Activated T-helper 1 cell treated with anti-CD3 and anti-CD28 coated beads, Interleukin-12 subunit alpha, Interleukin-12 subunit beta, Interleukin-2, Interleukin-4 antibody, amounts not matched to agents 30 ng/mL and 10 ng/mL and 1 ng/mL, durations not matched to agents 14 hours and 24 hours and 36 hours (primary cell): ENCODE measurements at regions of chr2 and their contacts with region 1.

Region 1: DNA sequence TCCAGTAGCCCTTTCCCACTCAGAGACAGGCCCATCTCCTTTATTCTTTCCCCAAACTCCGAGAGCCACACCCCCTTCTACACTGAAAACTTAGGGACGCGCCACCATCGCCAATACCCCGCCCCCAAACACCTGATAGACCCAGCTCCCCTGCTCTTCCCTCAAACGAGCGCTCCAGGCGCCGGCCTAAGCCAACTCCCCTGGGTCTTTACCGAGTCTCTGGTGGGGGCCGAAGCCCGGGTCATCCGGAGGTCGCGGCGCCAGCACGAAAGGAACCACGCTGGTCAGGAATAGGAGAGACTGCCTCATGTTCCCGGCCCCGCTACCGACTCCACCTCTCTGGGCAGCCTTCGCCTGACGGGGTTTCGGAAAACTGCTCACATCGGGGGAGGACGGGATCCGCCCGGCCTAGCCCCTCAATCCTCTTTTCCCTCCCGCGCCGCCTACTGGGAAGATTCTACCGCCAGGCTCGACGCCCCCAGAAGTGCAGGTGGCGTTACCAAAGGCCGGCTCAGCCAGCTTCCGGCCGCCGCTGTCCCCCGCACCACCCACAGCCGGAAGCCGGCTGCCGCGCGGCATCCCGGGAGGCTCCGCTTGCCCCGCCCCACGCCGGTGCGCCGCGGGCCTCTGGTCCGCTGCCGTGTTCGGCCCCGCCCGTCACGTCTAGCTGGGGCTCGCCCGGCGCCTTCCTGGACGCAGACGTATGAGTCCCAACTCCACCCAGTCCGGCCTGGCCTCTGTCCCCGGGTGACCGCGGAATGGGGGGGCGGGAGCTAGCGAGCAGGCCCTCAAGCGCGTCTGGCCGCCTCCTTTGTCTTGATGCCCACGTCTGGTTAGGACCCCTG is at the start of gene ADAM17:
- DNase-seq: peak; percentile 89
- H3K4me3 Mint-ChIP-seq: peak within 1 kb of the TSS; percentile 99
- H3K27ac Mint-ChIP-seq: peak within 1 kb of the TSS; percentile 98
- H3K4me1 Mint-ChIP-seq: peaks cover 59% of the 10 kb centered on the region
- H3K27me3 Mint-ChIP-seq: no peaks in the 10 kb centered on the region
- total RNA-seq, gene ADAM17: 30.4 and 31.6 TPM in 2 replicates

Region 2: GRCh38 chr2:8821276-8822217 is 734.0 kb before region 1 on chr2:
- intact Hi-C with region 1: no loop called
- DNase-seq: no peak
- H3K4me3 Mint-ChIP-seq: no peak overlapping the region
- H3K27ac Mint-ChIP-seq: no peak overlapping the region
- H3K4me1 Mint-ChIP-seq: no peaks in the 10 kb centered on the region
- H3K27me3 Mint-ChIP-seq: no peaks in the 10 kb centered on the region

Region 3: GRCh38 chr2:9488583-9489547 is 66.7 kb before region 1 on chr2:
- intact Hi-C with region 1: loop called (anchors 2 kb)
- DNase-seq: no peak
- H3K4me3 Mint-ChIP-seq: no peak overlapping the region
- H3K27ac Mint-ChIP-seq: no peak overlapping the region
- H3K4me1 Mint-ChIP-seq: peaks cover 22% of the 10 kb centered on the region
- H3K27me3 Mint-ChIP-seq: no peaks in the 10 kb centered on the region

Region 4: DNA sequence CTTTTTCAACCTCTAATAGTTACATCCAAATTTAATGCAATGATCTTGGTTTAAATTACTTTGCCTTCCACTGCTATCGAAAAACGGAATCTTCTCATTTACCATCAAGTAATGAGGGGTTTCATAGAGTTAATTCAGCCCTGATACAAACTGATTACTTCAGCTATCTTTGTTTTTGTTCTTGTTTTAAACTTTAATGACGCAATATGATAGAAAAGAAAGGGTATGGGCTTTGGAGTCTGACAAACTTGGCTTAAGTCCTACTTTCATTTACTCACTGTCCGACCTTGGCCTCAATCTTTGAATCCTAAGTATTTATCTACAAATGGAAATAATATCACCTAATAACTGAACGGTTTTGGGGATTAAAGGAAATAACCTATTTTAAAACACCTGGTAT is 16.0 kb before region 1 on chr2:
- intact Hi-C with region 1: no loop called
- DNase-seq: no peak
- H3K4me3 Mint-ChIP-seq: no peak overlapping the region
- H3K27ac Mint-ChIP-seq: no peak overlapping the region
- H3K4me1 Mint-ChIP-seq: peaks cover 30% of the 10 kb centered on the region
- H3K27me3 Mint-ChIP-seq: no peaks in the 10 kb centered on the region

Region 5: DNA sequence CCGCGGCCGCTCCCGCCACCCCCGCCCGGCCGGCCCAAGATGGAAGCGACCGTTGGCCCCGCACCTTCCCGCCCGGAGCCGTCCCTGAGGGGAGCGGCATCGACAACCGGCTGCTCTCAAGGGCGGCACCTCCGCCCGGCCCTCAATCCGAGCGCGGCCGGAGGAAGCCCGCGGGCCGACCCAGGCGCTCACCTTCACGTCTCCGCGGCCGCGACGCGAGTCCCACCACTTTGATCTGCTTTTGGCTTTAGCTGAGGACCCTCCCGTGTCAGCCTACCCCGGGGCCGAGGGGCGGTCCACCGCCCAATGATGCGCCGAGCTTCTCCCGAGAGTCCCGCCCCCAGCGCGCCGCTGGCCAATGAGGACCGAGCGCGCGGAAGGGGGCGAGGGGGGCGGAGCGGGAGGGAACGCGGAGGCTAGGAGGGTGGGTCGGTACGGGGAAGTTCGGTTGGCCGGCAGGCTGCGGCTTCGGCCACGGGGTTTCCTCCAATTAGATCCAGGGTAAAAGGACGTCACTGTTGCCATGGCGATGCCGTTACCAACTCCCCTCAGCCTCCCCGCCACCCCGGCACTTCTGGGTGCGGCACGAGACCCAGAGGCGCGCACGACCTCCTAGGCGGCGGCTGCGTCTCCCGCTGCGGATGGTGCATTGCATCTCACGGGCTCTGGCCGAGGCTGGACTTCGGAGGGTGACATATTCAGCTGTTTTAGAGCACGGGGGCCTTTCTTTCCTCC is 75.4 kb after region 1 on chr2 and contains the start of gene YWHAQ:
- intact Hi-C with region 1: loop called (anchors 1 kb)
- DNase-seq: peak; percentile 97
- H3K4me3 Mint-ChIP-seq: peak within 1 kb of the TSS; percentile 97
- H3K27ac Mint-ChIP-seq: peak within 1 kb of the TSS; percentile 93
- H3K4me1 Mint-ChIP-seq: peaks cover 45% of the 10 kb centered on the region
- H3K27me3 Mint-ChIP-seq: peaks cover 9% of the 10 kb centered on the region
- total RNA-seq, gene YWHAQ: 290 and 311 TPM in 2 replicates

Region 6: GRCh38 chr2:9753276-9753600 is 197.7 kb after region 1 on chr2:
- intact Hi-C with region 1: loop called (anchors 1 kb)
- DNase-seq: peak; percentile 45
- H3K4me3 Mint-ChIP-seq: peak overlapping the region; percentile 77
- H3K27ac Mint-ChIP-seq: peak overlapping the region; percentile 96
- H3K4me1 Mint-ChIP-seq: peaks cover 70% of the 10 kb centered on the region
- H3K27me3 Mint-ChIP-seq: peaks cover 34% of the 10 kb centered on the region

Region 7: GRCh38 chr2:9897331-9897737 is 341.8 kb after region 1 on chr2:
- intact Hi-C with region 1: loop called (anchors 5 kb)
- DNase-seq: no peak
- H3K4me3 Mint-ChIP-seq: no peak overlapping the region
- H3K27ac Mint-ChIP-seq: peak overlapping the region; percentile 14
- H3K4me1 Mint-ChIP-seq: peaks cover 29% of the 10 kb centered on the region
- H3K27me3 Mint-ChIP-seq: no peaks in the 10 kb centered on the region

Region 8: GRCh38 chr2:10448208-10448645 is 892.7 kb after region 1 on chr2 and contains the start of gene ODC1:
- intact Hi-C with region 1: loop called (anchors 10 kb)
- DNase-seq: peak; percentile 90
- H3K4me3 Mint-ChIP-seq: peak within 1 kb of the TSS; percentile 100
- H3K27ac Mint-ChIP-seq: peak within 1 kb of the TSS; percentile 98
- H3K4me1 Mint-ChIP-seq: peaks cover 45% of the 10 kb centered on the region
- H3K27me3 Mint-ChIP-seq: peaks cover 1% of the 10 kb centered on the region
- total RNA-seq, gene ODC1: 235 and 247 TPM in 2 replicates